Dorsolateral prefrontal cortex (tissue), 120 donors: ENCODE measurements at regions of chr11 and their contacts with region 1.

Region 1: GRCh38 chr11:117717485-117718314 is 79.3 kb downstream of the DSCAML1 start:
- DNase-seq: peak; percentile 32 to 96 (median 92)
- H3K4me3 ChIP-seq: peak overlapping the region in 4 of 59 donors; percentile 6 to 34 (median 13)
- H3K27ac ChIP-seq: peak overlapping the region; percentile 79 to 100 (median 98)
- H3K27me3 ChIP-seq: no peaks in the 10 kb centered on the region
- CTCF ChIP-seq: peak in 6 of 56 donors; percentile 8 to 21 (median 16)

Region 2: DNA sequence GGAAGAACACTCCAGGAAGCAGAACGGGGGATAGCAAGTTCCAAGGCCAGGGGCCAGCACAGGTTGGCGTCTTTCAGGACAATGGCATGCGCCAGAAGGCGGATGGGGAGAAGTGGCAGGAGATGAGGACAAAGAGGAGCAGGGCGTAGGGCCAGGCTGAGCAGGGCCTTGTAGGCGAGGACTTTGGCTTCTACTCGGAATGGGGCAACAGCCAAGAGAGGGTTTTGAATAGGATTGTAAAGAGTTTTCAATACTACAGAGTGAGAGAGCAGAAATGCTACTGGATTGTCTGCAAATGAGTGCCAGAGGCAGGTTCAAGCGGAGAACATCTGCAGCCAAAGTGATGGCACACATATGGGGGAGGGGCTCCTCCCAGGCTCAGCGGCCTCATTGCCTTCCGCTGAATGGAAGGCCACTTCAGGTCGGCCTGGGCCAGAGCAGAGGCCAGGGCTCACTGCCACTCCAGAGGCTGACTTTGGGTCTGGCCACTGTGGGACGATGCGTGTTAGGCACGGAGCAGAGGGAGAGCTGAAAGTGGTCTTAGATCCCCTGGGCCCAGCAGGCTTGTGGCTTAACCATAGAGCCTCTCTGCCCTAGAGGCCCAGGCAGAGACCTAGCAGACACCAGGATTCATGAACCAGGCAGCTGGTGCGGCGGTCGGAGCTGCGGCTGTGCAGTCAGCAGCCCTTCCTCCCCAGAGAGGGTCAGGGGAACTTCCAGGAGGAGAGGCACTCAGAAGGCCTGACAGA is 38.9 kb before region 1 on chr11:
- intact Hi-C with region 1: loop called (anchors 5 kb)
- DNase-seq: peak in 8 of 10 donors; percentile 62 to 84 (median 70)
- H3K4me3 ChIP-seq: no peak overlapping the region
- H3K27ac ChIP-seq: peak overlapping the region; percentile 73 to 99 (median 96)
- H3K27me3 ChIP-seq: no peaks in the 10 kb centered on the region
- CTCF ChIP-seq: peak in 1 of 56 donors; percentile 3